ENCODE measurements at regions of chr17 and their contacts with region 1.

Region 1: DNA sequence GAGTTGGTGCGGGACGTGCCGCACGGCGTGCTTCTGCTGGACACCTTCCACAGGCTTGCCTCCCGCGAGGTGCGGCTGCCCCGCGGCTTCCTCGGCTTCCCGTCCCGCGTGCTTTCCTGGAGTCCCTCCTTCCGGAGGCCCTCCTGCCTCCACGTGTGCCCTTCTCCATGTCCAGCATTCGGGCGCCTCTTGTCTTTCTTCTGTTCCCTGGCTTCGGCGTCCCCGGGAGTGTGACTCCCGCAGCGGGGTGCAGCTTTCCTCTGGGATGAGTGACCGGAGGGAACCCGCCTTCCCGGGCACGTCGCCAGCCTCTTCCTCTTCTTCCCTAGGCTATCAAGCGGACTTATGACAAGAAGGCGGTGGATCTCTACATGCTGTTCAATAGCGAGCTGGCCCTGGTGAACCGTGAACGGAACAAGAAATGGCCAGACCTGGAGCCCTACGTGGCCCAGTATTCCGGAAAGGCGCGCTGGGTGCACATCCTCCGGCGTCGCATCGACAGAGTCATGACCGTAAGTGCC is 23.0 kb downstream of the DNAH2 start:
- DNase-seq: no peak
- H3K4me3 ChIP-seq: peak overlapping the region; percentile 7; the same call in 1 of the 2 replicates
- H3K27ac ChIP-seq: no peak overlapping the region
- H3K27me3 ChIP-seq: peaks cover 26% of the 10 kb centered on the region
- CTCF ChIP-seq: no peak

Region 2: DNA sequence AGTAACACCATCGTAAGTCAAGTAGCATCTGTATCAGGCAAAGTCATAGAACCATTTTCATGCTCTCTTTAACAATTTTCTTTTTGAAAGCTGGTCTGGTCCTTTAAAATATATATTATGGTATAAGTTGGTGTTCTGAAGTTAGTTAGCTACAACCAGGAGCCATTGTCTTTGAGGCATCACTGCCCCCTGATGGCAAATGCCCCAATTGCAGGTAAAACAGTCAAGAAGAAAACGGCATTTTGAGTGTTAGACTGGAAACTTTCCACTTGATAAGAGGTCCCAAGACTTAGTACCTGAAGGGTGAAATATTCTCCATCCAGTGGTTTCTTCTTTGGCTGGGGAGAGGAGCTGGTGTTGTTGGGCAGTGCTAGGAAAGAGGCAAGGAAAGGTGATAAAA is 67.3 kb before region 1 on chr17:
- CTCF ChIA-PET with region 1: no interaction called
- POLR2A ChIA-PET with region 1: no interaction called
- DNase-seq: no peak
- H3K4me3 ChIP-seq: no peak overlapping the region
- H3K27ac ChIP-seq: no peak overlapping the region
- H3K27me3 ChIP-seq: no peaks in the 10 kb centered on the region
- CTCF ChIP-seq: peak; percentile 48

Region 3: GRCh38 chr17:7755095-7755890 is 14.8 kb after region 1 on chr17:
- CTCF ChIA-PET with region 1: no interaction called
- POLR2A ChIA-PET with region 1: no interaction called
- DNase-seq: no peak
- H3K4me3 ChIP-seq: no peak overlapping the region
- H3K27ac ChIP-seq: no peak overlapping the region
- H3K27me3 ChIP-seq: no peaks in the 10 kb centered on the region
- CTCF ChIP-seq: no peak

Region 4: GRCh38 chr17:8016632-8017478 is 276.3 kb after region 1 on chr17:
- CTCF ChIA-PET with region 1: interaction called, 10 read pairs
- POLR2A ChIA-PET with region 1: no interaction called
- DNase-seq: no peak
- H3K4me3 ChIP-seq: no peak overlapping the region
- H3K27ac ChIP-seq: no peak overlapping the region
- H3K27me3 ChIP-seq: peaks cover 50% of the 10 kb centered on the region
- CTCF ChIP-seq: peak; percentile 49

Measured in AG04450 (cell line).